Naive thymus-derived CD4-positive, alpha-beta T cell (primary cell): ENCODE measurements at regions of chr5 and their contacts with region 1.

Region 1: GRCh38 chr5:32531885-32532520 is 53.4 kb upstream of the SUB1 start:
- DNase-seq: peak in 8 of 9 donors; percentile 28 to 78 (median 53)
- ATAC-seq: peak; percentile 82
- H3K4me3 ChIP-seq: peak overlapping the region; percentile 56
- H3K4me3 Mint-ChIP-seq: peak overlapping the region; percentile 81 to 96 (median 88)
- H3K27ac ChIP-seq: peak overlapping the region; percentile 96
- H3K27ac Mint-ChIP-seq: peak overlapping the region; percentile 93 to 99 (median 95)
- H3K4me1 ChIP-seq: peaks cover 12 to 22% of the 10 kb centered on the region in 2 donors
- H3K4me1 Mint-ChIP-seq: peaks cover 8 to 70% (median 36%) of the 10 kb centered on the region in 7 donors
- H3K27me3 ChIP-seq: no peaks in the 10 kb centered on the region
- H3K27me3 Mint-ChIP-seq: no peaks in the 10 kb centered on the region

Region 2: DNA sequence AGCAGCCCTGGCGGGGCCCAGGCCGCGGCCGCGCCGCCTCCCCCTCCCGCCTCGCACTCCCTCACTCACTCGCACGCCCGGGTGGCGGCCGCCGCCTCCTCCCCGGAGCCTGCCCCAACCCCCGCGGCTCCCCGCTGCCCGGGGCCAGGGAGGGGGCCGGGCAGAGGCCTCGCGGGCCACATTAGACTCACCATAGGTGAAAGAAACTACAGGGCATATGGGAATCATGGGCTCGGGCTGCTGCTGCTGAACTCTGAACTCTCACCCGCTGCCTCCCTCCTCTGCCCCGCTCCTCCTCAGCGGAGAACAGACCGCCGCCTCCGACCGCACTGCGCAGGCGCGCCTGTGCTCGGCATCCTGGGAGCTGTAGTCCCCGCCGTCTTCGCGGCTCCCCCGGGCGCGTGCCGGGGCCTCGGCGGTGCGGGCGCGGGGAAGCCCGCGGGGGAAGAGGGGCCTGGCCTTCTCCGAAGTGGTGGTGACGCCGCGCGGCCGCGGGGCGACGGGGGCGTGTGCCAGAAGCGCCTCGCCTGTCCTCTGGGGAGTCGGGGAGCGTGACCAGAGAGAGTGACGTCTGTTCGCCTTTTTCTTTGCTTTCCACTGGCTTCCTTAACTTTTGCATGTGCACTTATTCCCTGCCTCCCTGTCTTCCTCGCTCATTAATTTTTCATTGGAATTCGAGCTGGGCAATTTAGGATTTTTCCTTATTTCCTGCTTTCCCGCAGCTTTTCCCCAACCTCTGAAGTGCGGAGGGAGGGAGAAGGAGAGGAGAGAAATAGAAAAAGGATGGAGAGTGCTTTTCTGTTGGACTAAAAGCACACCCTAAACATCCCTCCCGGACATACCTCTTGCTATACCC is 87.3 kb before region 1 on chr5 and contains the start of gene ZFR:
- CTCF ChIA-PET with region 1: no interaction called
- POLR2A ChIA-PET with region 1: no interaction called
- intact Hi-C with region 1: loop called in 1 of 2 experiments (anchors 2 kb)
- DNase-seq: peak; percentile 91 to 95 (median 93)
- ATAC-seq: peak; percentile 95
- H3K4me3 ChIP-seq: peak within 1 kb of the TSS; percentile 67
- H3K4me3 Mint-ChIP-seq: peak within 1 kb of the TSS; percentile 79 to 94 (median 92)
- H3K27ac ChIP-seq: peak within 1 kb of the TSS; percentile 93
- H3K27ac Mint-ChIP-seq: peak within 1 kb of the TSS; percentile 75 to 96 (median 93)
- H3K4me1 ChIP-seq: peaks cover 16 to 20% of the 10 kb centered on the region in 2 donors
- H3K4me1 Mint-ChIP-seq: peaks cover 24 to 38% (median 33%) of the 10 kb centered on the region in 7 donors
- H3K27me3 ChIP-seq: no peaks in the 10 kb centered on the region
- H3K27me3 Mint-ChIP-seq: peaks cover 0 to 17% (median 0%) of the 10 kb centered on the region in 5 donors
- total RNA-seq, gene ZFR: 53.4 to 59.3 (median 58.0) TPM

Region 3: GRCh38 chr5:32489791-32490582 is 42.0 kb before region 1 on chr5:
- CTCF ChIA-PET with region 1: interaction called, 16 read pairs
- POLR2A ChIA-PET with region 1: no interaction called
- intact Hi-C with region 1: loop called (anchors 1 to 5 kb)
- DNase-seq: peak; percentile 40 to 72 (median 64)
- ATAC-seq: peak; percentile 82
- H3K4me3 ChIP-seq: no peak overlapping the region
- H3K4me3 Mint-ChIP-seq: no peak overlapping the region
- H3K27ac ChIP-seq: no peak overlapping the region
- H3K27ac Mint-ChIP-seq: peak overlapping the region in 4 of 9 donors; percentile 11 to 56 (median 31)
- H3K4me1 ChIP-seq: no peaks in the 10 kb centered on the region
- H3K4me1 Mint-ChIP-seq: peaks cover 0 to 11% (median 7%) of the 10 kb centered on the region in 7 donors
- H3K27me3 ChIP-seq: no peaks in the 10 kb centered on the region
- H3K27me3 Mint-ChIP-seq: no peaks in the 10 kb centered on the region

Region 4: GRCh38 chr5:32504989-32505596 is 26.9 kb before region 1 on chr5:
- CTCF ChIA-PET with region 1: interaction called, 3 read pairs
- POLR2A ChIA-PET with region 1: interaction called, 3 read pairs
- intact Hi-C with region 1: loop called in 1 of 2 experiments (anchors 2 kb)
- DNase-seq: peak in 6 of 9 donors; percentile 7 to 35 (median 14)
- ATAC-seq: peak; percentile 67
- H3K4me3 ChIP-seq: no peak overlapping the region
- H3K4me3 Mint-ChIP-seq: peak overlapping the region in 9 of 10 donors; percentile 13 to 72 (median 46)
- H3K27ac ChIP-seq: peak overlapping the region; percentile 32
- H3K27ac Mint-ChIP-seq: peak overlapping the region in 8 of 9 donors; percentile 1 to 88 (median 74)
- H3K4me1 ChIP-seq: peaks cover 0 to 7% of the 10 kb centered on the region in 2 donors
- H3K4me1 Mint-ChIP-seq: peaks cover 11 to 26% (median 23%) of the 10 kb centered on the region in 7 donors
- H3K27me3 ChIP-seq: no peaks in the 10 kb centered on the region
- H3K27me3 Mint-ChIP-seq: peaks cover 0 to 16% (median 3%) of the 10 kb centered on the region in 5 donors

Region 5: GRCh38 chr5:32542216-32543059 is 10.4 kb after region 1 on chr5:
- CTCF ChIA-PET with region 1: no interaction called
- POLR2A ChIA-PET with region 1: no interaction called
- intact Hi-C with region 1: loop called in 1 of 2 experiments (anchors 1 kb)
- DNase-seq: peak in 1 of 9 donors; percentile 43
- ATAC-seq: no peak
- H3K4me3 ChIP-seq: no peak overlapping the region
- H3K4me3 Mint-ChIP-seq: peak overlapping the region in 1 of 10 donors; percentile 73
- H3K27ac ChIP-seq: no peak overlapping the region
- H3K27ac Mint-ChIP-seq: peak overlapping the region in 1 of 9 donors; percentile 93
- H3K4me1 ChIP-seq: peaks cover 0 to 12% of the 10 kb centered on the region in 2 donors
- H3K4me1 Mint-ChIP-seq: peaks cover 0 to 65% (median 14%) of the 10 kb centered on the region in 7 donors
- H3K27me3 ChIP-seq: no peaks in the 10 kb centered on the region
- H3K27me3 Mint-ChIP-seq: no peaks in the 10 kb centered on the region